Ovary (tissue), 10 donors: ENCODE measurements at regions of chr5 and their contacts with region 1.

Region 1: DNA sequence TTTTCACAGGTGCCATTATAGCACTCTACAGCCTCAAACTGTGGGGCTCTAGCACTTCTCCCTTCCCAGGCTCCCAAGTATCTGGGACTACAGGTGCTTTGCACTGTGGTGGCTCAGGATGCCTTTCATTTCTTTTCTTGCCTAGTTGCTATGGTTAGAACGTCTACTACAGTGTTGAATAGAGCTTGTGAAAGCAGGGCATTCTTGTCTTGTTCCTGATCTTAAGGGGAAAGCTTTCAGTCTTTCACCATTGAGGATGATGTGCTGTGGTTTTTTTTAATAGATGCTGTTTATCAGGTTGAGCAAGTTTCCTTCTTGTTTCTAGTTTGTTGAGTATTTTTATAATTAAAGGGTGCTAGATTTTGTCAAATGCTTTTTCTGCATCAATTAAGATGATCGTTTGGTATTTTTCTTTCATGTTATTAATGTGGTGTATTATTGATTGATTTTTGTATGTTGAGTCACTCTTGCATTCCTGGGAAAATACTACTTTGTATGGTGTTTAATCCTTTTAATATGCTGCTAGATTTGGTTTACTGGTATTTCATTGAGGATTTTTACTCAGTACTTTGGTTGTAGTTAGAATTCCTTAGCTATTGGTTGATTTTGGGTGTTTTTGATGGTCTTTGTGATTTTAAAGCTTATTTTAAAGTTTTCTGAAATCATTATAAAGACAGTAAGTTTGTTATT is 35.6 kb downstream of the GPBP1 start:
- DNase-seq: no peak
- H3K4me3 ChIP-seq: no peak overlapping the region
- H3K27ac ChIP-seq: no peak overlapping the region
- H3K4me1 ChIP-seq: peaks cover 11% of the 10 kb centered on the region
- H3K27me3 ChIP-seq: no peaks in the 10 kb centered on the region
- CTCF ChIP-seq: no peak
- EP300 ChIP-seq: no peak
- POLR2A ChIP-seq: no peak

Region 2: DNA sequence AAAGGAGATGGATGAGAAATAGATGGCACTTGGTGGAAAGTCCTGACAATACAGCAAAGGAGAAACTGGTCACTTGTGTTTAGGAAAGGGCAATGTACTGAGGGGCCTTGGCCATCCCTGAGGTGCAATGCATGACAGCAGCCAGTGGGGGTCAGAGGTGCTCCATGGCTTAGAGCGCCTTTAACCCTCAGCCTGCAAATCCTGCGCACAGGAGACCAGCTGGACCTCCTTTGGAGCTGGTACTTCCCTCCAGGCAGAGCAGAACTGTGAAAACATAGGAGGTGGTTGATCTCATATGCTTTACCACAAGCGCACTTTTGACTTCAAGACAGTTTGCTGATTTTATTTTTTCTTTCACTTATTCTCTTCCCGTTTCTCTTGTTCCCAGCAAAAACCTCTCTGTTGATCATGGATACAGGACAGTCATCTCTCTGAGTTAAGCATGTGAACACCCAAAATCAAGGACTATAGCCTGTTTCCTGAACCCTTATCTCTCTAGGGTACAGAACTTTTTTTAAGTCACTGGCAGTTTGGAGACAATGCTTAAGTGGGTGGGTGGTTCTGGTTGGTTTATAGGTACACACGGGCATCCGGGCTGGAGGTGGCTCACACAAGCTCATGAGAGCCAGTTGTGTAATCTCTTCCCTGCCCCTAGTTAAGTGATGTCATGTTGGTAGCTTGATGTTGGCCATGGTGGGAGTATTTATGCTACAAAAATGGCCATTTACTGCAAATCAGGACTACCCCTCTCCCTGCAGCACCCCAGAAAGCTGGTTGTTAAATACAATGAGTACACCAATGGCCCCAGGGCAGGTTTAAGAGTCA is 938.7 kb before region 1 on chr5:
- intact Hi-C with region 1: loop called in 1 of 4 experiments (anchors 10 kb)
- DNase-seq: peak; percentile 80 to 89 (median 84)
- H3K4me3 ChIP-seq: no peak overlapping the region
- H3K27ac ChIP-seq: no peak overlapping the region
- H3K4me1 ChIP-seq: peaks cover 2% of the 10 kb centered on the region
- H3K27me3 ChIP-seq: no peaks in the 10 kb centered on the region
- CTCF ChIP-seq: peak; percentile 86 to 92 (median 91)
- EP300 ChIP-seq: no peak
- POLR2A ChIP-seq: no peak

Region 3: DNA sequence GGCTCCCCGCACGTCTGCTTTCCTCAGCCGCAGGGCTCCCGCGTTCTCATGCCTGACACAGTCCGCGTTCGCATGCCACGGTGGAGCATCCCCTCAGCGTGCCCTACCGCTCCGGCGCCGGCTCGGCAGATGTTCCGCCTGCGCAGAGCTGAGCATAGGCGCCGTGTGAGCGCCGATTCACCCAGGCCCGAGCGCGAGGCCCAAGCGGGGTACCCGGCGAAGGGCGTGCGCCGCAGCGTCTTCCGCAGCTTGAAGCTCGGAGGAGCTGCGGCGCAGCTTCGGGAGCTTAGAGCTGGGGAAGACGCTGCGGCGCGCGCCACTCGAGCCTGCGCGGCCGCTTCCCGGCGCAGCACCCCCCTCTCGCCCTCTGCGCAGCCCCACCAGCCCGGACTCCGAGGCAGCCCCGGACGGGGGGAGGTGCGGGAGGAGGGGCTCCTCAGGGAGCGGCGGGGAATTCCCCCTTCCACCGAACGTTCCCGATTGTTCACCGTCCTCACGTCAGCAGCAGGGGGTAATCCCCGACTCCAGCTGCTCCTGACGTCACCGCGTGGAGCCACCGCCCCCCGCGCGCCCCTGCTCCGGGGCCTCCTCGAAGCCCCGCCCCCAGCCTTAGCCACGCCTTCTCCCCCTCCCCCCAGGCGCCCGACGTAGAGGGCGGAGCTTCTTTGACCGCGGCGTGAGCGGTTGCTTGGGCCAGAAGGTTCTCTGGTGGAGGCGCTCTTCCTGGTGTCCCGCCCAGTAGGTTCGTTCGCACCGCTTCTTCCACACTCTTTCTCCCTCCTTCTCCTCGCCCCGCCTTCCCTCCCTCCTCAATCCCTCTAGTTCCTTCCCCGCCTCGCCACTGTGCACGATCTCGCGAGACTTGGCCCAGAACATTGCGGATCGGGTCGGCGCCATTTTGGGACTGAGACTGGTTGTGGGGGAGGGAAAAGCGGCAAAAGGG is 36.0 kb before region 1 on chr5 and contains the start of gene GPBP1:
- intact Hi-C with region 1: loop called in 1 of 4 experiments (anchors 1 kb)
- DNase-seq: peak; percentile 98 to 100 (median 99)
- H3K4me3 ChIP-seq: peak within 1 kb of the TSS; percentile 96
- H3K27ac ChIP-seq: peak within 1 kb of the TSS; percentile 97 to 99
- H3K4me1 ChIP-seq: peaks cover 5% of the 10 kb centered on the region
- H3K27me3 ChIP-seq: no peaks in the 10 kb centered on the region
- CTCF ChIP-seq: no peak
- EP300 ChIP-seq: peak; percentile 85
- POLR2A ChIP-seq: peak; percentile 86
- total RNA-seq, gene GPBP1: 78.2 to 124 (median 96.1) TPM

Region 4: GRCh38 chr5:57259704-57260103 is 50.2 kb after region 1 on chr5:
- intact Hi-C with region 1: no loop called
- DNase-seq: no peak
- H3K4me3 ChIP-seq: no peak overlapping the region
- H3K27ac ChIP-seq: no peak overlapping the region
- H3K4me1 ChIP-seq: no peaks in the 10 kb centered on the region
- H3K27me3 ChIP-seq: no peaks in the 10 kb centered on the region
- CTCF ChIP-seq: no peak
- EP300 ChIP-seq: no peak
- POLR2A ChIP-seq: no peak